ENCODE measurements at regions of chrX and their contacts with region 1.

Region 1: DNA sequence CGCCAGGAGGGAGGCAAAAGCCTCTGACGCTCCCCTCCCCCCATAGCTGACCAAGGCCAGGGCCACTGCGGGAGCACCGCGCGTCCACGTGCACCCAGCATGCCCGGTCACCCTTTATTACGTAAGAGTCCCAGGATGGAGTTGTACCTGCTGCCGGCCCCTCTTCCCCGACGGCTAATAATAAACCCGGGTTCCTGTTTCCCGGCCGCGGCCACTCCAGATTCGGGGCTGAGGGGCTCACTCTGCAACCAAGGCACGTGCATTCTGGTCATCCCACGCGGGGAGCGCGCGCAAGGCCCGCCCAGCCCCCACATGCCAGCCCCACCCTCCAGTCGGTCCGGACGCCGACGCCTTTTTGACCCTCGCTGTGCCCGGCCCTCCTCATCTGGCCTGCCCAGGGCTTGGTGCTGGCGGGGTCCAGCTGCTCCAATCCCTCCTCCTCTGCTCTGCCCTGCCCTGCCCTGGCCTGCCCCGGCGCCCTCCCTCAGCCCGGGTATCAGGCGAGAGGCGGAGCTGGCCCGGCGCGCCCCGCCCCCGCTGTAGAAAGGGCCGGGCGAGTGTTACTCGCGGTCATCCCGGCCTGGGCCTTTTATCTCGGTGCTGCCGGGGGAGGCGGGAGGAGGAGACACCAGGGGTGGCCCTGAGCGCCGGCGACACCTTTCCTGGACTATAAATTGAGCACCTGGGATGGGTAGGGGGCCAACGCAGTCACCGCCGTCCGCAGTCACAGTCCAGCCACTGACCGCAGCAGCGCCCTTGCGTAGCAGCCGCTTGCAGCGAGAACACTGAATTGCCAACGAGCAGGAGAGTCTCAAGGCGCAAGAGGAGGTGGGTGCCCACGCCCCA is 2.5 kb downstream of the MID1IP1 start:
- DNase-seq: peak; percentile 88
- H3K4me3 ChIP-seq: peak overlapping the region; percentile 53 to 81 (median 68)
- H3K27ac ChIP-seq: peak overlapping the region; percentile 92 to 99 (median 96)
- H3K4me1 ChIP-seq: peaks cover 0 to 32% (median 11%) of the 10 kb centered on the region in 4 donors
- H3K27me3 ChIP-seq: no peaks in the 10 kb centered on the region
- CTCF ChIP-seq: no peak
- EP300 ChIP-seq: peak; percentile 41
- POLR2A ChIP-seq: peak; percentile 91

Region 2: DNA sequence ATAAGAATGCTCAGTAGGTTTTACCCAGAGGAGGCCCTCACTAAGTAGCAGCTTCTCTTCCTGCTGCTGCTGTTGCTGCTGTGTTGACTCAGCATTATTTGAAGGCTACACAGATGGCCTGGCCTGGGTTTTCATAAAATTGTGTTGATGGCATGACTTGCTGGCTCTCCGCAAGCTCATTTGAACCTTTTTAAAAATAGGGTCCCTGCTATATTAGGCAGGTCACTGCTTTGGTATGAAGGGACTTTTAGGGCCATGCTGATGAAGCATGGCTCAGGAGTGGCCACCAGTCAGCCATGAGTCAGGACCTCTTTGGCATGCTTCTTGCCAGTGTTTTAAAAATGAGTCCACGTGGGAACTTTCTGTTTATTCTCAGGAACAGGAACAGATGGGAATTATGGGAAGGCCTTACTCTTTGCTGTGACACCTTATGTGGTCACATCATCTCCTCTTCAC is 126.2 kb after region 1 on chrX:
- in situ Hi-C with region 1: no loop called
- intact Hi-C with region 1: loop called (anchors 10 kb)
- DNase-seq: no peak
- H3K4me3 ChIP-seq: no peak overlapping the region
- H3K27ac ChIP-seq: peak overlapping the region in 3 of 4 donors; percentile 33 to 54 (median 49)
- H3K4me1 ChIP-seq: no peaks in the 10 kb centered on the region
- H3K27me3 ChIP-seq: no peaks in the 10 kb centered on the region
- CTCF ChIP-seq: no peak
- EP300 ChIP-seq: peak; percentile 58
- POLR2A ChIP-seq: no peak

Measured in transverse colon (tissue), 4 donors.